Activated naive CD4-positive, alpha-beta T cell treated with anti-CD3 and anti-CD28 coated beads for 36 hours (primary cell): ENCODE measurements at regions of chr12 and their contacts with region 1.

Region 1: GRCh38 chr12:642633-643474 is 20.4 kb downstream of the NINJ2 start:
- DNase-seq: peak; percentile 81
- H3K4me3 Mint-ChIP-seq: peak overlapping the region; percentile 74
- H3K27ac Mint-ChIP-seq: peak overlapping the region; percentile 81
- H3K4me1 Mint-ChIP-seq: peaks cover 58% of the 10 kb centered on the region
- H3K27me3 Mint-ChIP-seq: no peaks in the 10 kb centered on the region

Region 2: DNA sequence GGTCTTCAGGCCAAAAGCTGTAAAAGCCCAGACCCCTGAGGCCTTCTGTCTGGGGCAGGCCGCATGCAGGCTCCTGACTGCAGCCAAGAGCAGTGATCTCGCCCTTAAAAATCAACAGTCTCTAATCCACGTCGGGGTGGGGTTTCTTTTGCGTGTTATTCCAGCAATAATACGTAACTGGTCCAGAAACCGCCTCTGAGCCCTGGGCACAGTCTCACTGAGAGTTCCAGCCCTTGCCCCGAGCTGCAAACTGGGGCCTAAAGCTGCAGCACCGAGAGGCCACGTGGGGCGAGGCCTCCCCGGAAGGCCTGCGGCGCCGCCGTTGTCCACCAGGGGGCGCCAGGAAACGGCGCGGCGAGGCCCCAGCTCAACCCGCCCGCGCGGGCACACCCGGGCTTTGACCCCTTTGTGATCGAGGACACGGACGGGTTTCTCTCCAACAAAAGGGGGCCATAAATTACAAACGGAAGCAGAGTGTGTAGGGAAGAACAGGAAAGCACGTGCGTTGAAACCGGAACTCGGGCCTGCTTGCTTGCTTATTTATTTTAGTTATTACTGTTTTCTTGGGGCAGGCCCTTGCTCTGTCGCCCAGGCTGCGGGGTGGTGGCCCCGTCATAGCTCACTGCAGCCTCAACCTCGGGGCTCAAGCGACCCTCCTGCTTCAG is 66.8 kb before region 1 on chr12:
- CTCF ChIA-PET with region 1: interaction called, 3 read pairs
- intact Hi-C with region 1: loop called (anchors 2 kb)
- DNase-seq: peak; percentile 80
- H3K4me3 Mint-ChIP-seq: peak overlapping the region; percentile 14
- H3K27ac Mint-ChIP-seq: no peak overlapping the region
- H3K4me1 Mint-ChIP-seq: peaks cover 29% of the 10 kb centered on the region
- H3K27me3 Mint-ChIP-seq: no peaks in the 10 kb centered on the region

Region 3: GRCh38 chr12:614411-614970 is 28.4 kb before region 1 on chr12:
- CTCF ChIA-PET with region 1: interaction called, 4 read pairs
- intact Hi-C with region 1: loop called (anchors 1 kb)
- DNase-seq: peak; percentile 72
- H3K4me3 Mint-ChIP-seq: no peak overlapping the region
- H3K27ac Mint-ChIP-seq: no peak overlapping the region
- H3K4me1 Mint-ChIP-seq: peaks cover 30% of the 10 kb centered on the region
- H3K27me3 Mint-ChIP-seq: no peaks in the 10 kb centered on the region

Region 4: GRCh38 chr12:622416-622815 is 20.4 kb before region 1 on chr12:
- CTCF ChIA-PET with region 1: interaction called, 4 read pairs
- intact Hi-C with region 1: loop called (anchors 1 kb)
- DNase-seq: peak; percentile 57
- H3K4me3 Mint-ChIP-seq: peak overlapping the region; percentile 10
- H3K27ac Mint-ChIP-seq: peak overlapping the region; percentile 81
- H3K4me1 Mint-ChIP-seq: peaks cover 43% of the 10 kb centered on the region
- H3K27me3 Mint-ChIP-seq: no peaks in the 10 kb centered on the region